Heart right ventricle (tissue), 16 donors: ENCODE measurements at regions of chr2 and their contacts with region 1.

Region 1: DNA sequence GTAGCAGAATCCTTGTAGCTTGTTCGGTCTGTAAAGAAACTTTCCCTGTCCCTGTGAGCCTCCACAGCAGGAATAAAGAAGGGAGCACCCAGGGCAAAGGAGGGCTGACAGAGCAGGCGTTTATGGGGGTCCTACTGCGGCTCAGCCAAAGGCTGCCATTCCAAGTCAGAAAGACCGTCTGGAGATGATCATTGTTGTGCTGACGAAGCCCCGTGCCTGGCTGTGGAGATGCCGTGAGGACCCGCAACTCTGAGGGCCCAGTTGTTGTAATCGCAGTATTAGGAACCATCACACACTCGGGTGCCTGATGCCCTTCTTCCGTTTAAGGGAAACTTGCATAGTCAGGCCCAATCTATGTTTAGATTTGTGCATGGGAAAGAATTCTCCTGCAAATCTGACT is 16.9 kb upstream of the VWA3B start:
- DNase-seq: no peak
- ATAC-seq: peak in 1 of 8 donors; percentile 44
- H3K4me3 ChIP-seq: no peak overlapping the region
- H3K27ac ChIP-seq: peak overlapping the region in 1 of 10 donors; percentile 22
- H3K4me1 ChIP-seq: no peaks in the 10 kb centered on the region
- H3K27me3 ChIP-seq: peaks cover 0 to 4% (median 0%) of the 10 kb centered on the region in 7 donors
- CTCF ChIP-seq: no peak

Region 2: DNA sequence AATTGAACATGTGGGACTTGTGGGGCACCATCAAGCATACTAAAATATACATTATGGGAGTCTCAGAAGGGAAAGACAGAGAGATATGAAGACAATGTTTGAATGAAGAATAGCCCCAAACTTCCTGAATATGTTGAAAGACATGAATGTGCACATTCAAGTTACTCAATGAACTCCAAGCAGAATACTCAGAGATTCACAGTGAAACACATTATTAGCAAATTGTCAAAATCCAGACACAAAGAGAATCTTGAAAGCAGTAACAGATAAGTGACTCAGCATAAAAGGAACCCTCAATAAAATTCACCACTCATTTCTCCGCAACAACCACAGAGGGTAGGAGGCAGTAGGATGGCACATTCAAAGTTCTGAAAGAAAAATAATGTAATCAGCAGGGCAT is 391.8 kb before region 1 on chr2:
- intact Hi-C with region 1: no loop called
- DNase-seq: no peak
- ATAC-seq: no peak
- H3K4me3 ChIP-seq: no peak overlapping the region
- H3K27ac ChIP-seq: no peak overlapping the region
- H3K4me1 ChIP-seq: no peaks in the 10 kb centered on the region
- H3K27me3 ChIP-seq: no peaks in the 10 kb centered on the region
- CTCF ChIP-seq: no peak

Region 3: GRCh38 chr2:97926946-97927345 is 143.1 kb before region 1 on chr2:
- intact Hi-C with region 1: loop called in 1 of 10 experiments (anchors 5 kb)
- DNase-seq: no peak
- ATAC-seq: no peak
- H3K4me3 ChIP-seq: no peak overlapping the region
- H3K27ac ChIP-seq: no peak overlapping the region
- H3K4me1 ChIP-seq: peaks cover 0 to 44% (median 29%) of the 10 kb centered on the region in 9 donors
- H3K27me3 ChIP-seq: no peaks in the 10 kb centered on the region
- CTCF ChIP-seq: no peak